Naive thymus-derived CD4-positive, alpha-beta T cell (primary cell): ENCODE measurements at regions of chr16 and their contacts with region 1.

Region 1: GRCh38 chr16:50185005-50185505 is 31.9 kb downstream of the TENT4B start:
- DNase-seq: no peak
- ATAC-seq: no peak
- H3K4me3 ChIP-seq: no peak overlapping the region
- H3K4me3 Mint-ChIP-seq: peak overlapping the region in 1 of 10 donors; percentile 17
- H3K27ac ChIP-seq: no peak overlapping the region
- H3K27ac Mint-ChIP-seq: peak overlapping the region in 3 of 9 donors; percentile 0 to 28 (median 1)
- H3K4me1 ChIP-seq: peaks cover 7 to 10% of the 10 kb centered on the region in 2 donors
- H3K4me1 Mint-ChIP-seq: peaks cover 32 to 78% (median 73%) of the 10 kb centered on the region in 7 donors
- H3K27me3 ChIP-seq: no peaks in the 10 kb centered on the region
- H3K27me3 Mint-ChIP-seq: no peaks in the 10 kb centered on the region

Region 2: DNA sequence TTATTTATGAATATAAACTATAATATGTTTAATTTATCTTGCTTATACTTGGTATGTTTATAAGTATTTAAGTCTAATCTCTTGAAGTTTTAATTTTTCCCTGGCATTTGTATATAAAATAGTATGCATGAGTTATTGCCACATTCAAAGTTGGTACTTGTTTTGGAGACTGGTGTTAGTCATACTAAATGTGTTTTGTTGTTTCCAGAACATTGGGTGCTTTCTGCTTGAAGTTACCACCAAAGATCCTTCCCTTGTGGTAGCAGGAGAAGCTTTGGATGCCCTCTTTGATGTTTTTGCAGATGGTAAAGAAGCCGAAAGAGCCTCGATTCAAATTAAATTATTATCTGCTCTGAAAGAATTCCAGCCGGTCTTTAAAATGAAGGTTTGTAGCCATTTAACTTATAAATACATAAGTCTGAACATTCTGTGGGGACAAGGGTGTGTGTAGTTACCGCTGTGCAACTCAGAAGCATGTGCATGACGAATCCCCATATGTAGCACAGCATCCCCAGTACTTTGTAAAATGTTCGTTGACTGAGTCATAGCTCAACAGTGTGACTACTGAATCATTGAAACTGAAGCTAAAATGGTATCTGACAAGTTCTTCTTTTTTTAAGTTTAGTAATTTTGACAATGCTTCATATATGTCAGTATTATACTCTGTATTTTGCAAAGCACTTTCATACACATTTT is 82.9 kb before region 1 on chr16:
- CTCF ChIA-PET with region 1: no interaction called
- POLR2A ChIA-PET with region 1: no interaction called
- intact Hi-C with region 1: no loop called
- DNase-seq: no peak
- ATAC-seq: no peak
- H3K4me3 ChIP-seq: no peak overlapping the region
- H3K4me3 Mint-ChIP-seq: no peak overlapping the region
- H3K27ac ChIP-seq: no peak overlapping the region
- H3K27ac Mint-ChIP-seq: peak overlapping the region in 1 of 9 donors; percentile 70
- H3K4me1 ChIP-seq: no peaks in the 10 kb centered on the region
- H3K4me1 Mint-ChIP-seq: peaks cover 0 to 15% (median 0%) of the 10 kb centered on the region in 7 donors
- H3K27me3 ChIP-seq: no peaks in the 10 kb centered on the region
- H3K27me3 Mint-ChIP-seq: no peaks in the 10 kb centered on the region

Region 3: DNA sequence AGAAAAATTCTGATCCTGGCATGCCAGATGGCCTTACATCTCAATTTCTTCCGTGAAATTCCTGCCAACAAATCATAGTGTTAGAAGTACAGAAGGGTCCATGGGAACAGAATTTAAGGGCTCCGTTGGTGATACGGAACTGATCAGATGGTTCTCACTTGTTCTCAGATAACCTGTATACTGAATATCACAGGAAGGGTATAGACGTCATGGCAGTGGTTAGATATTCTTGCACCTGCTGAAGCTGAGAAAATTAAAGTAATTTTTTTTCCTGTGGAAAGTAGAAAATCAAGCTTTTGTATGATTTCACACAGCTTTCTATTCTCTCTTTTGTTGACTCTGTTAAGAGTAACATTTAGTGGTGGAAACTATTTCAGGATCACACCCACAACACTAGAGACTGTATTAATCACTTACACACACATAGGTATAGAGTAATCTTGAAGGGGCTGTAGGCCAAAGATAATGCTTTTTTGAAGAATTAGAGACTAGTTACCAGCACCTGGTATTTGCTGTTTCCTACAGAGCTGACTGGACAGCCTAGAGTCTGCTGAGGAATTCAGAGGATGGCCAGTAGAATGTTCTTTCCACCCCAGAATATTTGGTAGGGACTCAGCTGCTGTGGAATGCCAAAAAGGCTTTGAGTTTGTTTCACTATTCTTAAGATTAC is 24.4 kb before region 1 on chr16:
- CTCF ChIA-PET with region 1: no interaction called
- POLR2A ChIA-PET with region 1: interaction called, 7 read pairs
- intact Hi-C with region 1: loop called in 1 of 2 experiments (anchors 2 kb)
- DNase-seq: peak in 7 of 9 donors; percentile 18 to 58 (median 43)
- ATAC-seq: peak; percentile 84
- H3K4me3 ChIP-seq: no peak overlapping the region
- H3K4me3 Mint-ChIP-seq: peak overlapping the region in 9 of 10 donors; percentile 7 to 75 (median 53)
- H3K27ac ChIP-seq: peak overlapping the region; percentile 65
- H3K27ac Mint-ChIP-seq: peak overlapping the region in 8 of 9 donors; percentile 26 to 94 (median 84)
- H3K4me1 ChIP-seq: peaks cover 37 to 48% of the 10 kb centered on the region in 2 donors
- H3K4me1 Mint-ChIP-seq: peaks cover 51 to 78% (median 71%) of the 10 kb centered on the region in 7 donors
- H3K27me3 ChIP-seq: no peaks in the 10 kb centered on the region
- H3K27me3 Mint-ChIP-seq: no peaks in the 10 kb centered on the region

Region 4: GRCh38 chr16:50195276-50195675 is 10.2 kb after region 1 on chr16:
- CTCF ChIA-PET with region 1: no interaction called
- POLR2A ChIA-PET with region 1: no interaction called
- intact Hi-C with region 1: loop called in 1 of 2 experiments (anchors 2 kb)
- DNase-seq: no peak
- ATAC-seq: no peak
- H3K4me3 ChIP-seq: no peak overlapping the region
- H3K4me3 Mint-ChIP-seq: peak overlapping the region in 8 of 10 donors; percentile 4 to 71 (median 45)
- H3K27ac ChIP-seq: peak overlapping the region; percentile 3
- H3K27ac Mint-ChIP-seq: peak overlapping the region; percentile 11 to 87 (median 56)
- H3K4me1 ChIP-seq: peaks cover 18 to 25% of the 10 kb centered on the region in 2 donors
- H3K4me1 Mint-ChIP-seq: peaks cover 46 to 86% (median 75%) of the 10 kb centered on the region in 7 donors
- H3K27me3 ChIP-seq: no peaks in the 10 kb centered on the region
- H3K27me3 Mint-ChIP-seq: no peaks in the 10 kb centered on the region